Activated T-helper 2 cell treated with anti-CD3 and anti-CD28 coated beads, Interferon-gamma antibody, Interleukin-2, Interleukin-4, amounts not matched to agents 10 μg/mL and 5 μg/mL and 100 μg/mL, durations not matched to agents 14 hours and 24 hours and 36 hours (primary cell): ENCODE measurements at regions of chr11 and their contacts with region 1.

Region 1: DNA sequence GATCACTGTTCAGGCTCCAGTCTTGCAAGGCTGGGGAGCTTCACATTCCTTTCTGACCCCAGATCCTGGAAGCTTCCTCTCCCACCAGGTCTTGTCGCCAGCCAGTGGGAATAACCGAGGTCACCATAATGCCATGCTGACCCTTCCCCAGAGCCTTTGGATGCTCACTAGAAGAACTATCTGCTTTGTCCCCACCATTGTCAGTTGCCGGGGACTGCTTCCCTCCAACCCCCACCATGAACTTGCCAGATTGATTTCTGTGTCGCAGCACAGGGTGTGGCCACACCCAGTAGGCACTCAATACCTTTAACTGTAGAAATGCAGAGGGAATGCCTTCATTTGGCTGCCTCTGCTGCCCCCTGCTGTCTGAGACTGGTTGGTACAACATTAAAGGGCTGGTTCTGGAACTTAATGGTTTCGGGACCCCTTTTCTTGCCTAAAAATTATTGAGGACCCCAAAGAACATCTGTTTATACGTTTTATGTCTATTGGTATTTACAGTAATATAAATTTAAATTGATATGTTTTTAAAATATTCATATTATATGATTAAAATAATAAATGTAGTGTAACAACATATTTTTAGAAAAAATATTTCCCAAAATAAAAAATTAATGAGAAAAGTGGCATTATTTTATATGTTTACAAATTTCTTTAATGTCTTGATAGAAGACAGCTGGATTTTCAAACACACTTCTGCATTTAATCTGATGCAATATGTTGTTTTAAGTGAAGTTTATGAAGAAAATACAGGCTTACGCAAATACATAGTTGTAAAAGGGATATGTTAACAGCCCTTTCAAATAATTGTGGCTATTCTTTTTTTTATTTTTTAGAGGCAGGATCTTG is 6.7 kb upstream of the GDPD5 start:
- DNase-seq: peak; percentile 72
- H3K4me3 Mint-ChIP-seq: no peak overlapping the region
- H3K27ac Mint-ChIP-seq: no peak overlapping the region
- H3K4me1 Mint-ChIP-seq: peaks cover 28% of the 10 kb centered on the region
- H3K27me3 Mint-ChIP-seq: no peaks in the 10 kb centered on the region

Region 2: DNA sequence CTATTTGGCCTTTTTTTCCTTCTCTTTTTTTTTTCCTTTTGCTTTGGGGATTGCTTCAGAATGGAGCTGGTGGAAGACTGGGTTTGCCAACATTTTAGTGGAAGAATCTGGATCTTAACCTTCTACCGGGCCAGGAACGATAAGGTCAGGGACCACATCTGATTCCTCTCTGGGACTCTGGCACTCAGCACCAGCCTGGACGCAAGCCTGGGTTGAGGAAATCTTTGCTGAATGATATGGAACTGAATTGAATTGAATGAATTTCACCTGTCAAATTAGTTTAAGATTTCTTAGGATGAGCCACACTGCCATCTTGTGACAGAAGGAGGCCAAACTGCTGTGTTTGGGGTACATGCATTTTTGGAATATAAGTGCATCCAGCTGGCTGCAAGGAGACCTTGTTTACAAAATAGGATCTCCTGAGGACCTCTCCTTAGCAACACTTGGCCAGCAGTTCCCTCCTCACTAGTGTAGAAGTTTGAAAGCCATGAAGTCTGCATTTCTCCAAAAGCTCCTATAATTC is 261.5 kb before region 1 on chr11:
- intact Hi-C with region 1: loop called (anchors 10 kb)
- DNase-seq: no peak
- H3K4me3 Mint-ChIP-seq: no peak overlapping the region
- H3K27ac Mint-ChIP-seq: no peak overlapping the region
- H3K4me1 Mint-ChIP-seq: peaks cover 11% of the 10 kb centered on the region
- H3K27me3 Mint-ChIP-seq: no peaks in the 10 kb centered on the region

Region 3: DNA sequence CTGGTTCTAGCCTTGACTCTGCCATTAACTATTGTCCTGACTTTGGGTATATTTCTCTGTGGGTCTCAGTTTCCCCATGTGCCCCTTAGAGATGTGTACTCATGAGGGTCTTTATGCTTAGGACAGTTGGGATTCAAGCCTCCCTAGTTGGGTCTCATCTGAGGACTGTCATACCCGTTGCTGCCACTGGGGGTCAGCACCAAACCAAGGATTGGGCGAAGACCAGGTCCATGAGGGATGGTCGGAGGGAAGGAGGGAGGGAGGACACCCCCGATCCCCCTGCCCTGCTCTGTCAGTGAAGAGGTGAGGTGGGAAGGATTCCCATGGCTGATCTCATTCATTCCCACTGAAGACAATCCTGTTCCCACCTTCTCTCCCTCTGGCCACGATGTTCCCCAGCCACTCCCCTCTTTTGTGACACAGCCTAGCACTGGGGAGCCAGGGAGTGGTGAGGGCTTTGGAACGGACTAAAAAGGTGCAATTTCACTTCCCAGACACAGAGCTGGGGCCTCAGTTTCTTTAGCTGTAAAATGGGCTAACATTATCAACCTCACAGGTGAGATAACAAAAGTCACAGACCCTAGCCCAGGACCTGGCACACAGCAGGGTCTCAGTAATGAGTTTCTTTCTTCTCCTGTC is 87.0 kb before region 1 on chr11:
- intact Hi-C with region 1: loop called (anchors 1 kb)
- DNase-seq: peak; percentile 48
- H3K4me3 Mint-ChIP-seq: no peak overlapping the region
- H3K27ac Mint-ChIP-seq: no peak overlapping the region
- H3K4me1 Mint-ChIP-seq: no peaks in the 10 kb centered on the region
- H3K27me3 Mint-ChIP-seq: peaks cover 3% of the 10 kb centered on the region

Region 4: DNA sequence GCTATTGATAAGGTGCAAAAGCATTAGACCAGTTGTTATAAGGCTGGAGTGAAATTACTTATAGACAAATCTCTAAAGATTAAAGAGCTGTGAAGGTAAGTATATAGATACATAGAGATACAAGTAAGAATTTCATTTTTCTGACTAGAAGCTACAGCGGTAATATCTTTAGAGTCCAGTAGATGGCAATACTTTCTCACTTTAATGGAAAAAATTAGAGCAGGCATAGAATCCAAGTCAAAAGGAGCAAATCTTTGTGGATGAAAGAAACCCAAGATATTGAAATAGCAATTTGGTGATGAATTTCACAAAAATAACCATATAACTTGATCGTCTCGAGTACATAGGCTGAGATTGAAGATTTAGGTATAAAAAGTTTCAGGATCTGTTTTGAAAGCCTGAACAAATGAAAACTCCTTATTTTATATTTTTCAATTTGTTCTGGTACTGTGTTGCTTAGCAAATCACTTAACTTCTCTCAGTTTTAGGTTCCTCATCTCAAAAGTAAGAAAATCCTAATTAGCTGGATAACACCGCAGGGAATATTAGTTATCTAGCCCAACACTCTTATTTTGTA is 364.5 kb after region 1 on chr11:
- intact Hi-C with region 1: no loop called
- DNase-seq: no peak
- H3K4me3 Mint-ChIP-seq: no peak overlapping the region
- H3K27ac Mint-ChIP-seq: no peak overlapping the region
- H3K4me1 Mint-ChIP-seq: peaks cover 25% of the 10 kb centered on the region
- H3K27me3 Mint-ChIP-seq: peaks cover 4% of the 10 kb centered on the region